Sigmoid colon (tissue), 7 donors: ENCODE measurements at regions of chr3 and their contacts with region 1.

Region 1: GRCh38 chr3:61858056-61858455 is 296.7 kb downstream of the PTPRG start:
- DNase-seq: no peak
- H3K4me3 ChIP-seq: no peak overlapping the region
- H3K27ac ChIP-seq: no peak overlapping the region
- H3K4me1 ChIP-seq: peaks cover 0 to 35% (median 24%) of the 10 kb centered on the region in 4 donors
- H3K27me3 ChIP-seq: no peaks in the 10 kb centered on the region
- CTCF ChIP-seq: peak in 1 of 4 experiments; percentile 45
- EP300 ChIP-seq: no peak
- POLR2A ChIP-seq: no peak

Region 2: DNA sequence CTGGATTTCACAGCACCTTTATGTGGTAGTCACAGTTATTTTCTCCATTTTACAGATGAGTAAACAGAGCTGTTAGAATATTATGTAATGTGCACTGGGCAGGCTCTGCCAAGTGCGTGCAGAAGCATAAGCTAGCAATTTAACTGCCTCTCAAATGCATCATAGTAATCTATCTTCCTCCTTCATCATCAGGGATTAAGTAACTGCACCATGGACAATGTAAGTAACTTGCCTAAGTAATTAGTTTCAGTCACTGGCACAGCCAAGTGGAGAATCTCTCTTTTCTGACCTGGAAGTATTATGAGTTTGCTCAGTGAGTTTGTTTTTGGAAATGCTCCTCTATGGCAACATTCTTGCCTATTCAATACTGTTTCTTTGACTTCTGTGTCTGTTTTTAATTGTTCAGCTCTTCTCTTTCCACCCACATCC is 36.2 kb before region 1 on chr3:
- intact Hi-C with region 1: no loop called
- DNase-seq: peak; percentile 73
- H3K4me3 ChIP-seq: no peak overlapping the region
- H3K27ac ChIP-seq: peak overlapping the region; percentile 7 to 46 (median 12)
- H3K4me1 ChIP-seq: peaks cover 0 to 32% (median 25%) of the 10 kb centered on the region in 4 donors
- H3K27me3 ChIP-seq: no peaks in the 10 kb centered on the region
- CTCF ChIP-seq: no peak
- EP300 ChIP-seq: peak in 3 of 4 donors; percentile 20 to 59 (median 51)
- POLR2A ChIP-seq: no peak

Region 3: GRCh38 chr3:62188681-62189383 is 330.8 kb after region 1 on chr3:
- intact Hi-C with region 1: loop called (anchors 2 kb)
- DNase-seq: peak; percentile 88
- H3K4me3 ChIP-seq: no peak overlapping the region
- H3K27ac ChIP-seq: no peak overlapping the region
- H3K4me1 ChIP-seq: peaks cover 0 to 17% (median 4%) of the 10 kb centered on the region in 4 donors
- H3K27me3 ChIP-seq: no peaks in the 10 kb centered on the region
- CTCF ChIP-seq: peak; percentile 72 to 84 (median 78)
- EP300 ChIP-seq: no peak
- POLR2A ChIP-seq: no peak